Activated naive CD4-positive, alpha-beta T cell treated with anti-CD3 and anti-CD28 coated beads for 36 hours (primary cell): ENCODE measurements at regions of chr17 and their contacts with region 1.

Region 1: DNA sequence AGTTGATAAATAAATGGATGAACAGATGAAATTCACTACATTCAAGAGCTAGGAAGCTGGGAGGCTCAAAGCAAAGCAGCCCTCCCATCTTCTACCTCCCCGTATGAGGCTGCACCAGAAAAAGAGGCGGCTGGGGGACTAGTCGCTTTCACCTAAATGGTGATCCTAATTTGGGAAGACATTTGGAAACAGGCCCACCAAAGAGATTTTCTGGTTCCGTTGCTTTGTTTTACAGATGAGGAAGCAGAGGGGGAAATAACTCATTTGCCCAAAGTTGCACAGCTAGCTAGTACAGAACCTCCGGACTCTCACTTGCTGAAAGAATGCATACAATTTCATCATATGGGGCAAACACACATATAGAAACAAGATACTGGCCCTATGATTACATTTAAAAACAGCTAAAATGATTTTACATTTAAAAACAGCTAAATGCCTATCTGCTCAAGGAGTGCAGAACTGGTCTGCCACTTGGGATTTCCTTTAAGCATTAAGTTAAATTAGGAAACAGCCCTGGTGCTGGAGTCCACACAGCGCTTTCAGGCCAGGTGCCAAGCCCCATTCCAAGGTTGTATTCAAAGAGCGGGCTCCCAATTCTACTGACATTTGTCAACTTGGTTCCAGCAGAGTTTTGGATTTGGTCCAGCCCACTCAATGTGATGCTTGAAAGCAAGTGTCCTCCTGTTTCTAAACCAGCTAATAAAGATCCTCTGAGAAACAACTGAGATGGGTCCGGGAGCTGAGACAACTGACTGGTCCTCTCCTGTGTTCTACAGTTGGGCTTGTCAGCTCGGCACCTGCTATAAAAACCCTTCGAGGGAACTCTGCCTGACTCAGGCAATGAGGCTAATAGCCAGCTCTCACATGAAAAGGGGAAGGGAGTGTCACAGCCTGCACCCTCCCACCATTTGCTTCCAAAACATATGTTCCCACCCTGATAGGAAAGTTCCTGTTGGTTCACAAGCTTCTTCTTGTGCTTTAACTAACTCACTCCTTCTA is 11.7 kb downstream of the ERN1 start:
- DNase-seq: no peak
- H3K4me3 Mint-ChIP-seq: no peak overlapping the region
- H3K27ac Mint-ChIP-seq: no peak overlapping the region
- H3K4me1 Mint-ChIP-seq: peaks cover 69% of the 10 kb centered on the region
- H3K27me3 Mint-ChIP-seq: no peaks in the 10 kb centered on the region

Region 2: DNA sequence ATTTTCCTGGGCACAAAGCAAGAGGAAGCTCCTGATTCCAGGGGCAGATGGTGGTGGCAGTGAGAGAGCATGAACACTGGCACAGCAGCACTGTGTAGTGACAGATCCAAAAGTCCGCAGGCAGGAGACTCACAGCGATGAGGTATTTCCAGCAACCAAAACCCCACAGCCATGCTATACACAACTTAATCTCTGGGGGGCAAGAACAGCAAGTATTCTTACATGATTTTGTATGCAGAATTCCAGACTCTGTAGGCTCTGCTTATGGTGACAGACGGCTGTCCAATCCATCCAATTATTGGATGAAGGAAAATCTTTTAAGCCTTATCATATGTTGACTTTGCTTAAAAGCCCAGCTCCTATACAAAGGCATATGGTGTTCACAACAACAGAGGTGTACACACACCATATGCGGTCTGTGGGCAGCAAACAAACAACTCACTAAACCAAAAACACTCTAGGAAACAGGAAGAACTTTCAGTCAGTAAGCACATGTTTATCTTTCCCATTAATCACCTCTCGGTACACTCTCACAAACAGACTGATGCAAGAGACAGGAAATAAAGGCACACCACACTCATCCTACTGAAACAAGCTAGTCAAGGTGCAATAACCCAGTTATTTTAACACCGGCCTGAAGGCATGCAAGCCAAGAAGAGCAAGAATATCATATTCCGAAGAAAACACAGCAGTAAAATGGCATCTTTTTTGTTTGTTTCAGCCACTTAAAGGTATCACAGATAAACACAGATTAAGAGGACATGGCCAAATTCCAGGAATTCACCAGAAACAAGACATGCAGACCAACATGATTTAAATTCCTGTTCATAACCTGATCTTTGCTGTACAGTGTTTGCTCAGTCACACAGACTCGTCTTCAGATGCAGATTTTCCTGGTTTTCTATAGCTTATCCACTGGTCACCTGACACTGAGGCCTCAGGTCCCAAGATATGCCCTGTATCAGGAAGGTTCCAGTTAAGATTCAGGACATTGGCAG is 36.2 kb before region 1 on chr17:
- CTCF ChIA-PET with region 1: interaction called, 3 read pairs
- intact Hi-C with region 1: loop called (anchors 1 kb)
- DNase-seq: peak; percentile 65
- H3K4me3 Mint-ChIP-seq: peak overlapping the region; percentile 38
- H3K27ac Mint-ChIP-seq: no peak overlapping the region
- H3K4me1 Mint-ChIP-seq: peaks cover 7% of the 10 kb centered on the region
- H3K27me3 Mint-ChIP-seq: no peaks in the 10 kb centered on the region

Region 3: GRCh38 chr17:65163990-65164495 is 1045.8 kb after region 1 on chr17:
- CTCF ChIA-PET with region 1: no interaction called
- intact Hi-C with region 1: no loop called
- DNase-seq: peak; percentile 85
- H3K4me3 Mint-ChIP-seq: no peak overlapping the region
- H3K27ac Mint-ChIP-seq: peak overlapping the region; percentile 11
- H3K4me1 Mint-ChIP-seq: peaks cover 12% of the 10 kb centered on the region
- H3K27me3 Mint-ChIP-seq: no peaks in the 10 kb centered on the region